IMR-90 (cell line): ENCODE measurements at regions of chr13 and their contacts with region 1.

Region 1: GRCh38 chr13:109968876-109969577 is 182.6 kb upstream of the IRS2 start:
- DNase-seq: no peak
- ATAC-seq: no peak
- H3K4me3 ChIP-seq: no peak overlapping the region
- H3K27ac ChIP-seq: no peak overlapping the region
- H3K4me1 ChIP-seq: no peaks in the 10 kb centered on the region
- H3K27me3 ChIP-seq: no peaks in the 10 kb centered on the region
- CTCF ChIP-seq: no peak
- POLR2A ChIP-seq: no peak
- RAD21 ChIP-seq: no peak

Region 2: GRCh38 chr13:110628477-110628793 is 659.4 kb after region 1 on chr13:
- CTCF ChIA-PET with region 1: no interaction called
- POLR2A ChIA-PET with region 1: no interaction called
- dilution Hi-C with region 1: no loop called
- in situ Hi-C with region 1: no loop called
- intact Hi-C with region 1: loop called (anchors 10 kb)
- DNase-seq: no peak
- ATAC-seq: no peak
- H3K4me3 ChIP-seq: no peak overlapping the region
- H3K27ac ChIP-seq: no peak overlapping the region
- H3K4me1 ChIP-seq: no peaks in the 10 kb centered on the region; the same call in 1 of the 2 replicates
- H3K27me3 ChIP-seq: no peaks in the 10 kb centered on the region
- CTCF ChIP-seq: no peak
- POLR2A ChIP-seq: no peak
- RAD21 ChIP-seq: no peak